ENCODE measurements at regions of chr19 and their contacts with region 1.

Region 1: DNA sequence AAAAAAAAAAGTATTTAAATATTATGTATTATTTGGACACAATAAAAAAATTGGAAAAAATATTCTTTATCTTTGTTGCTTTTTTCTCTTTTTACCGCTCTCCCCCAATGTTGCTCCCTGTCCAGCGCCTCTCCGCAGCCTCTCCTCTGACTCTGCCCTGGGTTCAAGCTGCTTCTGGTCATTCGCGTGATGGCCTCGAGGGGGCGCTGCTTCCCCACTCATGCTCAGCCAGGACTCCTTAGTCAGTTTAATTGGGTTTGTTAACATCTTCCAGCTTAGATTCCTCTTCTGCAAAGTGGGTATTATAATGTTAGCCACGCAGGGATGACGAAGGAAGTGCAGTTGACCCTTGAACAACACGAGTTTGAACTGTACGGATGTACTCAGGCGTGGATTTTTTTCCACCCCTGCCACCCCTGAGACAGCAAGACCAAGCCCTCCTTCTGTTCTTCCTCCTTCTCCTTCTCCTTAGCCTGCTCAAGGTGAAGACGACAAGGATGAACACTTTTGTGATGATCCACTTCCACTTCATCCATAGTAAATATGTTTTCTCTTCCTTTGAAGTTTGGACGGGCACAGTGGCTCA is 4.9 kb upstream of the NWD1 start:
- DNase-seq: peak; percentile 77
- H3K4me3 ChIP-seq: no peak overlapping the region
- H3K27ac ChIP-seq: peak overlapping the region; percentile 15
- H3K4me1 ChIP-seq: no peaks in the 10 kb centered on the region
- H3K27me3 ChIP-seq: no peaks in the 10 kb centered on the region
- CTCF ChIP-seq: peak; percentile 97

Region 2: GRCh38 chr19:16605553-16605994 is 109.2 kb before region 1 on chr19:
- CTCF ChIA-PET with region 1: no interaction called
- POLR2A ChIA-PET with region 1: no interaction called
- intact Hi-C with region 1: no loop called
- DNase-seq: no peak
- H3K4me3 ChIP-seq: no peak overlapping the region
- H3K27ac ChIP-seq: no peak overlapping the region
- H3K4me1 ChIP-seq: peaks cover 7% of the 10 kb centered on the region
- H3K27me3 ChIP-seq: no peaks in the 10 kb centered on the region
- CTCF ChIP-seq: no peak

Region 3: DNA sequence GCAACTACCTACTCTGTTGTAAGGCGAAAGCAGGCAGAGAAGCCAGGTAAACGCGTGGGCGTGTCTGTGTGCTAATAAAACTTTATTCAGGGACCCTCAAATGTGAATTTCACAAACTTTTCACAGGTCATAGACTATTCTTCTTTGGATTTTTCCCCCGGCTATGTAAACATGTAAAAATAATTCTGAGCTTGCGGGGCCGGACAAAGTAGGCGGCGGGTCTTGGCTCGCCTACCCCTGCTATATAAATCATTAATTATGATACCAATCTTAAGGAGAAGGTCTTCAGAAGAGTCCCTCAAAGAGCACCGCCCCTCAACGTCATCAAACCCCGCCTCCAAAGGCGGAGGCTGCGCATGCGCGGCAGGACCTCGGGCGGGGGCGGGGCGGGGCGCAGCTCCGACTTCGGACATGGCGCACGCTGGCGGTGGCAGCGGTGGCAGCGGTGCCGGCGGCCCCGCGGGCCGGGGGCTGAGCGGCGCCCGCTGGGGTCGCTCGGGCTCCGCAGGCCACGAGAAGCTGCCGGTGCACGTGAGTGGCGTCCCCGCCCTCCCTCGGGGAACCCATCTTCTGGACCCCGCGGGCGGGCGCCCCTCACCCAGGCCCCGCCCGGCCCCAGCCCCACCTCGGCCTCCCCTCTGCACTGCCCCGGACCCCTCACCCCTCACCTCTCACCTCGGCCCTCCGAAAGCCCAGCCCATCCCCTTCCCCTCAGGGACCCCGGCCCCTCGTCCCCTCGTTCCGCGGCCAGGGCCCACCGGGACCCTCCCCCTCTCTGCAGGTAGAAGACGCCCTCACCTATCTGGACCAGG is 114.4 kb after region 1 on chr19 and contains the start of gene SIN3B:
- CTCF ChIA-PET with region 1: no interaction called
- POLR2A ChIA-PET with region 1: no interaction called
- intact Hi-C with region 1: loop called (anchors 5 kb)
- DNase-seq: peak; percentile 94
- H3K4me3 ChIP-seq: peak within 1 kb of the TSS; percentile 87
- H3K27ac ChIP-seq: peak within 1 kb of the TSS; percentile 73
- H3K4me1 ChIP-seq: peaks cover 19% of the 10 kb centered on the region
- H3K27me3 ChIP-seq: no peaks in the 10 kb centered on the region
- CTCF ChIP-seq: no peak
- total RNA-seq, gene SIN3B: 76.7 and 80.0 TPM in 2 replicates

Region 4: DNA sequence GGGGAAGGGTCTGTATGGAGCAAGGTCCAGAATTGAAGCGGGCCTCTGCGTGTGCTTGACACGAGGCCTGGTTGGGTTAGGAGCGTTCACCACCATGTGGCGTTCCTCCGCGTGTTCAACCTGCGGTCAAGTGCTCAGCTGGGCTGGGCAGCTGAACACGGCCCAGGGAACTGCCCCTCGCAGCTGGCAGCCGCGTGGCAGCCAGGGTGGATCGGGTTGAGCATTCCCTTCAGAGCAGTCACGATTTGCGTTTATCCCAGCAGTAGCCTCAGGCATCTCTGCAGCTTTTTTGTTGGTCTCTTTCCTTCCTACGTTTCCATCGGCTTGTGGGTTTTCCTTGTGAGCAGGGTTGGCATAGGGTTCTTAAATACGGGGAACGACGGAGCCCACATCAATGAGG is 145.3 kb after region 1 on chr19:
- CTCF ChIA-PET with region 1: no interaction called
- POLR2A ChIA-PET with region 1: interaction called, 10 read pairs
- intact Hi-C with region 1: no loop called
- DNase-seq: no peak
- H3K4me3 ChIP-seq: no peak overlapping the region
- H3K27ac ChIP-seq: no peak overlapping the region
- H3K4me1 ChIP-seq: no peaks in the 10 kb centered on the region
- H3K27me3 ChIP-seq: no peaks in the 10 kb centered on the region
- CTCF ChIP-seq: no peak

Measured in A673 (cell line).